ENCODE measurements at regions of chr2 and their contacts with region 1.

Region 1: DNA sequence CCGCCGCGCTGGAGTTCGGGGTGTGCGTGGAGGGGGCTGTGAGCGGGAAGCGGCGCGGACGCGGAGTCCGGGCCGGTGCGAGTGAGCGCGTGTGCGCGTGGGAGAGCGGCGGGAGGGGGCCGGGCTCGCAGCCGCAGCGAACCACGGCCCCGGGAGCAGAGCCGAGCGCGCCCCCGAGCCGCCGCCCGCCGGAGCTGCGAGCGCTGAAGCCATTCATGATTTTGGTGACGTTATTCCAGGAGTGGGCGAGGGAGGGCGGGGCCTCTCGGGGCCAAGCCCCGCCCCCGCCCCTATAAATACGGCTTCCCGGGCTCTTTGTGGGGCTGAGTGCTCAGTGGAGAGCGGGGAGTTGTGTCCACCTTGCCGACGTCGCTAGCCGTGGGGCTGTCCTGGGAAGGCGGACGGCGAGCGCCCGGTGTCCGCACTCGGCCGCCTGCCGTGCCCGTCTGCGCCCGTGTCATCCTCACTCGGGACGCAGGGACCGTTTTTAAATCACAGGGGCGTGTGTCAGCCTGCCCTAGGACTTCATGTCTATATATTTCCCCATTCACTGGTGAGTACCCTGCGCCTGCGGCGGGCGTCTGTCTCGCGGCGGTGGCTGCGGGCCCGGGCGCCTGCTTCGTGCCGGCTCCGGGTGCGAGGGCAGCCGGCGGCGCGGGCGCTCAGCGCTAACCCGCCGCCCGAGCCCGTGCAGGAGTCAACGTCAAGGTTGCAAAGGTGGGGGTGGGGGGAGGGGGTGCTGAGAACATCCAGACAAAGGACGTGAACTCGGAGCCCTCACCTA is at the start of gene LBH:
- DNase-seq: peak; percentile 90 to 92
- ATAC-seq: peak; percentile 82 to 91 (median 90)
- H3K4me3 ChIP-seq: peak within 1 kb of the TSS; percentile 75 to 97 (median 90)
- H3K27ac ChIP-seq: peak within 1 kb of the TSS; percentile 82 to 99 (median 94)
- H3K4me1 ChIP-seq: peaks cover 7 to 54% (median 45%) of the 10 kb centered on the region in 9 donors
- H3K27me3 ChIP-seq: peaks cover 0 to 45% (median 0%) of the 10 kb centered on the region in 7 donors
- CTCF ChIP-seq: peak in 2 of 9 donors; percentile 6 to 22
- total RNA-seq, gene LBH: 110 to 204 (median 156) TPM

Region 2: GRCh38 chr2:30410217-30410616 is 178.8 kb after region 1 on chr2:
- intact Hi-C with region 1: loop called in 5 of 10 experiments (anchors 5 kb)
- DNase-seq: no peak
- ATAC-seq: no peak
- H3K4me3 ChIP-seq: no peak overlapping the region
- H3K27ac ChIP-seq: peak overlapping the region in 9 of 10 donors; percentile 69 to 92 (median 86)
- H3K4me1 ChIP-seq: peaks cover 30 to 85% (median 67%) of the 10 kb centered on the region in 9 donors
- H3K27me3 ChIP-seq: no peaks in the 10 kb centered on the region
- CTCF ChIP-seq: no peak

Region 3: DNA sequence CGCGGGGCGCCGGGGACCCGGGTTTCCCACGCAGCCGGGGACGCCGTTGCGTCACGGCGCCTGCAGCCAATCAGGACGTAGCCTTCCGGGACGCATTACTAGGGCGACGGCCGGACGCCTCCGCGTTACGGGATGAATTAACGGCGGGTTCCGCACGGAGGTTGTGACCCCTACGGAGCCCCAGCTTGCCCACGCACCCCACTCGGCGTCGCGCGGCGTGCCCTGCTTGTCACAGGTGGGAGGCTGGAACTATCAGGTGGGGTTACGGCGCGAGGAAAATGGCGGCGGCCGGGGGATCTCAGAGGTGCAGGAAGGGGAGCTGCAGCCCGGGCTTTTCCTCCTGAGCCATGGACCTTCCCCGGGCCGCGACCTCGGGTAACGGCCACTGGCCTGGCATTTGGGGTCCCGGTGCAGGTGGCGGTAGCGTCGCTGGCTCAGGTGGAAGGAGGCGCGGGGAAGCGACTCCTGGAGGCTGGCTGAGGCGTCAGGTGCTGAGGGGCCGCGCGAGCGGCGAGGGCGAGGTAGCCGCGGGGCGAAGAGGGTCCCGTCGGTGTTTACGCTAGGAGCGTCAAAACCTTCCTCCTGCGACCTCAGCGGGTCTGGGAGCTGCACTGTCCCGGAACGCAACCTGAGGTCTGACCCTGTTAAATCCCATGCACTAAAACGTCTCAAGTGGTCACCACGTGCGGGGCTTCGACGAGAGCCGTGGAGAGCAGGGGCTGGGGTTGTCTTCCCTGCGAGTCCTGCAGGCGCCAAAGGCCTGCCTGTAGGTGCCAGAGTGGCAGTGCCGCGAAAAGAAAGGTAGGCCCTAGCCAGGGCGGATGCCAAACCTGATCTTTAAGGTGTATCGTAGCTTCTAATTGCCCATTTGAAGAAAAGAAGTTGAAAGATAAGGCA is 216.0 kb after region 1 on chr2 and contains the start of gene LCLAT1:
- intact Hi-C with region 1: loop called in 2 of 10 experiments (anchors 10 kb)
- DNase-seq: peak; percentile 87
- ATAC-seq: peak; percentile 95 to 99 (median 98)
- H3K4me3 ChIP-seq: peak within 1 kb of the TSS; percentile 79 to 99 (median 90)
- H3K27ac ChIP-seq: peak within 1 kb of the TSS; percentile 44 to 92 (median 87)
- H3K4me1 ChIP-seq: peaks cover 4 to 32% (median 21%) of the 10 kb centered on the region in 9 donors
- H3K27me3 ChIP-seq: no peaks in the 10 kb centered on the region
- CTCF ChIP-seq: peak in 3 of 9 donors; percentile 13 to 33 (median 22)
- total RNA-seq, gene LCLAT1: 26.6 to 56.4 (median 44.9) TPM

Region 4: DNA sequence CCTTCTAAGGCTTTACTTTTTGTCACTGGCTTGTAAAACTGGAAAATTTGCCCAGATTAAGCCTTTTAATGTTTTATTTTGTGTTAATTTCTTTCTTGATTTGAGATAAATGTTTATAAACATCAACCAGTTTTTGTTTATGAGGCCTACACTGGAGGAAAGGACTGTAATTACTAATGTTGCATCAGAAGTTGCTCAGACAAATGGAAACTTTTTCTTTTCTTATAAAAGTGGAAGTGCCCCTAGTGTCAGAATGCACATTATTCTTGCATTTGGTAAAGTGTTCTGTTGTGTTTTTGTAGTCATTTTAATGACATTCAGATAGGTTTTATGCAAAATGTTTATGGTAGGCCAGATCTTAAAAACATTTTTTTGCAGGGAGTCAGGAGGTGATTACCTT is 240.9 kb after region 1 on chr2:
- intact Hi-C with region 1: loop called in 2 of 10 experiments (anchors 10 kb)
- DNase-seq: no peak
- ATAC-seq: no peak
- H3K4me3 ChIP-seq: no peak overlapping the region
- H3K27ac ChIP-seq: peak overlapping the region in 3 of 10 donors; percentile 7 to 36 (median 17)
- H3K4me1 ChIP-seq: peaks cover 0 to 28% (median 13%) of the 10 kb centered on the region in 9 donors
- H3K27me3 ChIP-seq: no peaks in the 10 kb centered on the region
- CTCF ChIP-seq: no peak

Region 5: GRCh38 chr2:30511122-30512083 is 280.0 kb after region 1 on chr2:
- intact Hi-C with region 1: loop called in 1 of 10 experiments (anchors 5 kb)
- DNase-seq: peak; percentile 25 to 51
- ATAC-seq: peak in 7 of 8 donors; percentile 76 to 85 (median 84)
- H3K4me3 ChIP-seq: no peak overlapping the region
- H3K27ac ChIP-seq: peak overlapping the region; percentile 13 to 75 (median 48)
- H3K4me1 ChIP-seq: peaks cover 12 to 70% (median 57%) of the 10 kb centered on the region in 9 donors
- H3K27me3 ChIP-seq: no peaks in the 10 kb centered on the region
- CTCF ChIP-seq: no peak

Region 6: DNA sequence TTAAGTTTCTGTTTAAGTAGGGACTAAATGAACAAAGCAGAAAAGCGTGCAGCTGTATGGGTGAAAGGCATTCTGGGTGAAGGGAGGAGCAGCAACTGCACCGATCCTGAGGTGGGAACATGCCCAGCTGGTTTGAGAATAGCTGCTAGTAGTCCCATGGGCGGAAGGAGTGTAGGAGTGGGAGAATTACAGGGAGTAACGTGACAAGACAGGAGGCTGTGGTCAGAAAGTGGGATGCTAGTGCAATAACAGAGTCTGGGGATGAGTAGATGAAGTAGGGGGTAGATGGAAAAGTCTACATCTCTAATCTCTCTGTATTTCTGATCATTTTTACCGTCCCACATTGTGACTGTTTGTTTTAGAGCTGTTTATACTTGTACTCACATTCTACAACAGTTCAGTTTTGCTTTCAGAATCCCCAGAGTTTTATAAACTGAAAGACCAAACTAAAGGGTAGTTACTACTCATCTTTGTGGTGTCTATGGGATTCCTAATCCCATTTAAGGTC is 334.5 kb after region 1 on chr2:
- intact Hi-C with region 1: loop called in 1 of 10 experiments (anchors 10 kb)
- DNase-seq: peak in 1 of 2 donors; percentile 56
- ATAC-seq: peak; percentile 66 to 88 (median 84)
- H3K4me3 ChIP-seq: no peak overlapping the region
- H3K27ac ChIP-seq: peak overlapping the region in 9 of 10 donors; percentile 10 to 83 (median 51)
- H3K4me1 ChIP-seq: peaks cover 0 to 23% (median 7%) of the 10 kb centered on the region in 9 donors
- H3K27me3 ChIP-seq: no peaks in the 10 kb centered on the region
- CTCF ChIP-seq: no peak

Measured in heart right ventricle (tissue), 16 donors.